Endothelial cell of umbilical vein (primary cell): ENCODE measurements at regions of chr11 and their contacts with region 1.

Region 1: GRCh38 chr11:7630002-7630401 is 43.3 kb downstream of the CYB5R2 start:
- DNase-seq: peak; percentile 94
- H3K4me3 ChIP-seq: no peak overlapping the region
- H3K27ac ChIP-seq: no peak overlapping the region
- H3K4me1 ChIP-seq: peaks cover 5% of the 10 kb centered on the region
- H3K27me3 ChIP-seq: no peaks in the 10 kb centered on the region
- CTCF ChIP-seq: no peak
- POLR2A ChIP-seq: peak; percentile 35

Region 2: DNA sequence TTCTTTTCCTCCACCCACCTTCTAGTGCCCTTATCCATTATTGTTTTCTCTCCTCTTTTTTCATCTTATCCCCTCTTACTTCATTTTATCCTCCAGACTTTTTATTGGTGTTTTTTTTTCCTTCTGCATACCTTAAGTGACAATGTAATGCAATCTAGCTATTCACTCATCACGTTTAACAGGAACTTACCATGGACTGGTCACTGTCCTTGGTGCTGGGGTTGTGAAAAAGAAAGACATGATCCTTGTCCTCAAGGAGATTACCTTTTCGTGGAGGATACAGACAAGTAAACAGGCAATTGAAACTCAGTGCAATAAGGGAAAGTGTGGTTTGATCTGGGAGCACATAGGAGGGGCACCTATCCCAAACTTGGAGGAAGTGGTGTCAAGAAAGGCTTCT is 357.6 kb before region 1 on chr11:
- CTCF ChIA-PET with region 1: no interaction called
- POLR2A ChIA-PET with region 1: no interaction called
- dilution Hi-C with region 1: no loop called
- intact Hi-C with region 1: no loop called
- DNase-seq: no peak
- H3K4me3 ChIP-seq: no peak overlapping the region
- H3K27ac ChIP-seq: no peak overlapping the region
- H3K4me1 ChIP-seq: no peaks in the 10 kb centered on the region
- H3K27me3 ChIP-seq: no peaks in the 10 kb centered on the region
- CTCF ChIP-seq: no peak
- POLR2A ChIP-seq: no peak

Region 3: DNA sequence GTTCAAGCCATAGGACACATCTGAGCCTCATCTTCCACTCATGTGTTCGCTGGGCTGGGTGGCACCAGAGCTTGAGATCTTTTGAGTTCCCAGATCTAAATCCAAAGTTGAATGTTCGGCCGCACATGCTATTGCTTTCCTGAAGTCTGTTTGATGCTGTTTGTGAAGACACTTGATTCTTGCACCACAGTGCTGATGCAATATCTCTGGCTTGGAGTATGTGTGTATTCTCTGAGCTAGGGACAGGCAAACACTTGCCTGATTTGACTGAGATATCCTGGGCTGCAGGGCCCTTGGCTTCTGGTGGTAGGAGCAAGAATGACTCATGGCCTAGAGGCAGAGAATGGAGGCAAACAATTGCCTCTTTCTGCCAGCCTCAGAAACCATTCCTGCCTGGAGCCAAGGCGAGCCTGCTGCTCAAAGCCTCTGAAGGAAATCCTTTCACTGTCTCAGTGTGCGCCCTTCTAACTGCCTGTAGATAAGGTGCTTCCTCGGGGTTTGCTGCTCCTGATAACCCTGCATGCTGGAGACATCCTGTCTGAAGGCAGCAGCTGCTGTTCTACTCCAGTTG is 29.7 kb before region 1 on chr11:
- CTCF ChIA-PET with region 1: interaction called, 14 read pairs
- POLR2A ChIA-PET with region 1: interaction called, 16 read pairs
- dilution Hi-C with region 1: no loop called
- intact Hi-C with region 1: loop called (anchors 1 kb)
- DNase-seq: peak; percentile 92
- H3K4me3 ChIP-seq: no peak overlapping the region
- H3K27ac ChIP-seq: peak overlapping the region; percentile 52
- H3K4me1 ChIP-seq: peaks cover 36% of the 10 kb centered on the region
- H3K27me3 ChIP-seq: no peaks in the 10 kb centered on the region
- CTCF ChIP-seq: no peak
- POLR2A ChIP-seq: peak; percentile 79

Region 4: GRCh38 chr11:7605186-7605943 is 24.6 kb before region 1 on chr11:
- CTCF ChIA-PET with region 1: interaction called, 14 read pairs
- POLR2A ChIA-PET with region 1: interaction called, 16 read pairs
- dilution Hi-C with region 1: no loop called
- intact Hi-C with region 1: loop called (anchors 1 kb)
- DNase-seq: peak; percentile 98
- H3K4me3 ChIP-seq: peak overlapping the region in 1 of 3 experiments; percentile 1
- H3K27ac ChIP-seq: peak overlapping the region; percentile 85
- H3K4me1 ChIP-seq: peaks cover 35% of the 10 kb centered on the region
- H3K27me3 ChIP-seq: no peaks in the 10 kb centered on the region
- CTCF ChIP-seq: no peak
- POLR2A ChIP-seq: peak; percentile 78

Region 5: DNA sequence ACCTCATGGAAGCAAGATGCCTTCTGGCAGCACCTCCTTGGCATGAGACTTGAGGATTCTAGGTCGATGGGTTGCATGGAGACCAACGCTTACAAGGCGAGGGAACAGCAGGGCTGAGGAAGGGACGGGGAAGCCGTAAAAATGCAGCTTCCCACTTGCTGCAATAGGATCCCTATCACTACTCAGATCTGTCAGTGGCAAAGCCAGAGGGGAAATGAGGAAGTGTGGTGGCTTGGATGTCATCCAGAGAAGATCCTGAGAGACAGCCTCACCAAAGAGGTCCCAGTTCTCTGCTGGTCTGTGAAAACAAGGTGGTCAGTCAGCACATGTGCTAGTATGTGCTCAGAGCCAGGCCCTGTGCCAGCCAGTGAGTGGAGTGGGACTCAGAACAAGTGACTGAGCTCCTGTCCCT is 21.1 kb after region 1 on chr11:
- CTCF ChIA-PET with region 1: interaction called, 13 read pairs
- POLR2A ChIA-PET with region 1: no interaction called
- dilution Hi-C with region 1: no loop called
- intact Hi-C with region 1: no loop called
- DNase-seq: no peak
- H3K4me3 ChIP-seq: no peak overlapping the region
- H3K27ac ChIP-seq: no peak overlapping the region
- H3K4me1 ChIP-seq: no peaks in the 10 kb centered on the region
- H3K27me3 ChIP-seq: no peaks in the 10 kb centered on the region
- CTCF ChIP-seq: no peak
- POLR2A ChIP-seq: no peak